ENCODE measurements at regions of chr15 and their contacts with region 1.

Region 1: GRCh38 chr15:101088788-101089583 is 162.9 kb downstream of the CHSY1 start:
- DNase-seq: peak in 1 of 2 donors; percentile 83
- H3K4me3 ChIP-seq: peak overlapping the region; percentile 31 to 57
- H3K27ac ChIP-seq: peak overlapping the region in 1 of 2 donors; percentile 34
- H3K4me1 ChIP-seq: peaks cover 0 to 10% of the 10 kb centered on the region in 2 donors
- H3K27me3 ChIP-seq: no peaks in the 10 kb centered on the region
- CTCF ChIP-seq: peak; percentile 99 to 100 (median 100)

Region 2: GRCh38 chr15:101014921-101015841 is 73.8 kb before region 1 on chr15:
- intact Hi-C with region 1: loop called (anchors 5 kb)
- DNase-seq: peak in 1 of 2 donors; percentile 81
- H3K4me3 ChIP-seq: no peak overlapping the region
- H3K27ac ChIP-seq: no peak overlapping the region
- H3K4me1 ChIP-seq: no peaks in the 10 kb centered on the region
- H3K27me3 ChIP-seq: no peaks in the 10 kb centered on the region
- CTCF ChIP-seq: peak; percentile 62 to 90 (median 75)

Region 3: DNA sequence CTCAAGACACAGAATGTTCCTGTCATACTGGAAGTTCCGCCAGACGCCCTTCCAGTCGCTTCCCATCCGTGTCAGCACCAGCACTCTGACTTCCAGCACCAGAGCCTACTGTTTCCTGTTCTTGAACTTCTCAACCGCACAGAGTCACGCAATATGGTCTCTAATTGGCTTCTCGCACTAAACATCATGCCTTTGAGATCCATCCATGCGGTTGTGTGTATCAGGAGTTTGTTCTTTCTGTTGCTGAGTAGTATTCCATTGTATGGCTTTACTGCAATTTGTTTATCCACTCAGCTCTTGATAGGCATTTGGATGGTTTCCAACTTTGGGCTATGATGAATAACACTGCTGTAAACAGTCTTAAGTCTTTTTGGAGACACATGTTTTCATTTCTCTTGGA is 57.8 kb before region 1 on chr15:
- intact Hi-C with region 1: no loop called
- DNase-seq: no peak
- H3K4me3 ChIP-seq: no peak overlapping the region
- H3K27ac ChIP-seq: no peak overlapping the region
- H3K4me1 ChIP-seq: no peaks in the 10 kb centered on the region
- H3K27me3 ChIP-seq: no peaks in the 10 kb centered on the region
- CTCF ChIP-seq: no peak

Measured in ascending aorta (tissue), 2 donors.